ENCODE measurements at regions of chr11 and their contacts with region 1.

Region 1: GRCh38 chr11:129750349-129751292 is 65.0 kb upstream of the TMEM45B start:
- DNase-seq: peak; percentile 71
- H3K4me3 Mint-ChIP-seq: no peak overlapping the region
- H3K27ac Mint-ChIP-seq: no peak overlapping the region
- H3K4me1 Mint-ChIP-seq: no peaks in the 10 kb centered on the region
- H3K27me3 Mint-ChIP-seq: peaks cover 4% of the 10 kb centered on the region

Region 2: GRCh38 chr11:129279326-129280026 is 471.1 kb before region 1 on chr11:
- intact Hi-C with region 1: loop called (anchors 5 kb)
- DNase-seq: peak; percentile 74
- H3K4me3 Mint-ChIP-seq: peak overlapping the region; percentile 79
- H3K27ac Mint-ChIP-seq: peak overlapping the region; percentile 81
- H3K4me1 Mint-ChIP-seq: peaks cover 40% of the 10 kb centered on the region
- H3K27me3 Mint-ChIP-seq: peaks cover 29% of the 10 kb centered on the region

Region 3: GRCh38 chr11:129364143-129364654 is 386.4 kb before region 1 on chr11:
- intact Hi-C with region 1: loop called (anchors 1 kb)
- DNase-seq: peak; percentile 75
- H3K4me3 Mint-ChIP-seq: no peak overlapping the region
- H3K27ac Mint-ChIP-seq: no peak overlapping the region
- H3K4me1 Mint-ChIP-seq: no peaks in the 10 kb centered on the region
- H3K27me3 Mint-ChIP-seq: peaks cover 34% of the 10 kb centered on the region

Region 4: GRCh38 chr11:129703846-129704245 is 46.8 kb before region 1 on chr11:
- intact Hi-C with region 1: no loop called
- DNase-seq: no peak
- H3K4me3 Mint-ChIP-seq: no peak overlapping the region
- H3K27ac Mint-ChIP-seq: no peak overlapping the region
- H3K4me1 Mint-ChIP-seq: no peaks in the 10 kb centered on the region
- H3K27me3 Mint-ChIP-seq: no peaks in the 10 kb centered on the region

Region 5: GRCh38 chr11:129723761-129724162 is 26.9 kb before region 1 on chr11:
- intact Hi-C with region 1: no loop called
- DNase-seq: no peak
- H3K4me3 Mint-ChIP-seq: no peak overlapping the region
- H3K27ac Mint-ChIP-seq: no peak overlapping the region
- H3K4me1 Mint-ChIP-seq: peaks cover 9% of the 10 kb centered on the region
- H3K27me3 Mint-ChIP-seq: no peaks in the 10 kb centered on the region

Measured in activated T-helper 1 cell treated with anti-CD3 and anti-CD28 coated beads, Interleukin-12 subunit alpha, Interleukin-12 subunit beta, Interleukin-2, Interleukin-4 antibody, amounts not matched to agents 30 ng/mL and 10 ng/mL and 1 ng/mL, durations not matched to agents 14 hours and 24 hours and 36 hours (primary cell).